ENCODE measurements at regions of chr18 and their contacts with region 1.

Region 1: DNA sequence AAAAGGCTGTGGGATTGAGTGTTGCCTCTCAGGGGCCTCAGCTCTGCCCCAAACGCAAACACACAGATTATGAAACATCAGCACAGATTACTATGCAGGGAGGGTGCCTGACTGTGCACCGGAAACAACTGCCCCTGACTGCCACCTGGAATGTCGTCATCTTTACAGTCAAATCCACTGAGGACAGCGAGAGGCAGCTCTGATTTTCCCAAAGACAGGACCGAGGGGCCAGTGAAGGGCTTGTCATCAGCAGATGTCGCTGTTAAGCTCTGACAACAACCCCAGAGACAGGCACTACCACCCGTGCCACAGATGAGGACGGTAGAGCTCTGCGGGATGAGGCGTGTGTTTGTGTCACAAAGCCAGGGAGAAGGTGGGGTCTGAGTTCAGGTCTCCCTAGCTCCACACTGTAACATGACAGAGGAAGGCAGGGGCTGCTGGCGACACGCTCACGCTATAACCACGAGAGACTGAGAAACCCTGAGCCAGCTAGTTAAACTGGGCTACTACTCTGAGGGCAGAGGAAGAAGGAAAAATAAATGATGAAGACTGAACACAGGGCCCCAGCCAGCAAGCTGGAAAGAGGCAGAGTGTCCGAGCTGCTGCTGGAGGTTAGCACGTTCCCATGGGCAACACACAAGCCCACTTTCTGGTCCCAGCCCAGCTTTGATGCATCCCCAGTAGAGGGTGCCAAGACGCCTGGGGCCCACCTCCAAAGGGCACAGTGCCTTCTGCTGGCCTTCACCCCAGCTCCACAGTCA is 47.0 kb downstream of the PARD6G start:
- DNase-seq: peak; percentile 42
- ATAC-seq: peak; percentile 92
- H3K4me3 ChIP-seq: no peak overlapping the region
- H3K27ac ChIP-seq: no peak overlapping the region
- H3K4me1 ChIP-seq: peaks cover 4% of the 10 kb centered on the region; the same call in 1 of the 2 replicates
- H3K27me3 ChIP-seq: no peaks in the 10 kb centered on the region
- CTCF ChIP-seq: no peak

Region 2: DNA sequence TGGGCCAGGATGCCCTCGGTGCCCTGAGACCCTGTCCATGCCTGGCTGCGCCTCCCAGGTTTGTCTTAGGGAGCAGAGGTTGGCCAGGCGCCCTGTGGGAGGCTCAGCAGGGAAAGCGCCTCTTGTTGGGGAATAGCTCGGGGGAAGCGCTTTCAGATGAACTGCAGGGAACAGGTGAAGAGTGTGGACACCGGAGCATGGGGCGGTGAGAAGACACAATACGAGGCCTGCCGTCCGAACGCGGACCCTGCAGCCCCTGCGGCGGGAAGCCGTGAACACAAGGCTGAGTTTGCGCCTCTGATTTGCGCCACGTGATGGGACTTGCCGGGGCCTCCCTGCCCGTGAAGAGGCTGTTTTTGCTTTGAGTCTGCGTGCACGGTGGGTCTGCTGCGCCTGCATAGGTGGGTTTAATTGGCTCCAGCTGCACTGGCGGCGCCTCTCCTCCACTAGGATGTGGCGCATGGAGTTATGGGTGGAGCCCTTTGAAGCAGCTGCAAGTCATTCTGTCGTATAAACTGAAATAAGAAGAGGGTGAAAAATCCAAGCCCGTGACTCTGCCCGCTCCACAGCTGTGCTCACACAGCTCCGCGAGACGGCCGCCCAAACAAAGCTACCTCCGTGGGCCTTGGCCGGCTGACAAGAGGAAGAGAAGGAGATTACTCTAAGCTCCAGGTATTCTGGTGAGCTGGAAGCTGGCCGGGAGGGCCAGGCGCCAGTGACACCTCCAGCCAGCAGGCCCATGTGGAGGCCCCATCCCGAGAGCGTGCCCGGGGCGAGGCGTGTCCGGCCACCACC is 624.3 kb before region 1 on chr18:
- CTCF ChIA-PET with region 1: no interaction called
- POLR2A ChIA-PET with region 1: no interaction called
- in situ Hi-C with region 1: no loop called
- intact Hi-C with region 1: no loop called
- DNase-seq: no peak
- ATAC-seq: no peak
- H3K4me3 ChIP-seq: no peak overlapping the region
- H3K27ac ChIP-seq: no peak overlapping the region
- H3K4me1 ChIP-seq: no peaks in the 10 kb centered on the region
- H3K27me3 ChIP-seq: no peaks in the 10 kb centered on the region; the same call in 1 of the 2 replicates
- CTCF ChIP-seq: no peak

Region 3: DNA sequence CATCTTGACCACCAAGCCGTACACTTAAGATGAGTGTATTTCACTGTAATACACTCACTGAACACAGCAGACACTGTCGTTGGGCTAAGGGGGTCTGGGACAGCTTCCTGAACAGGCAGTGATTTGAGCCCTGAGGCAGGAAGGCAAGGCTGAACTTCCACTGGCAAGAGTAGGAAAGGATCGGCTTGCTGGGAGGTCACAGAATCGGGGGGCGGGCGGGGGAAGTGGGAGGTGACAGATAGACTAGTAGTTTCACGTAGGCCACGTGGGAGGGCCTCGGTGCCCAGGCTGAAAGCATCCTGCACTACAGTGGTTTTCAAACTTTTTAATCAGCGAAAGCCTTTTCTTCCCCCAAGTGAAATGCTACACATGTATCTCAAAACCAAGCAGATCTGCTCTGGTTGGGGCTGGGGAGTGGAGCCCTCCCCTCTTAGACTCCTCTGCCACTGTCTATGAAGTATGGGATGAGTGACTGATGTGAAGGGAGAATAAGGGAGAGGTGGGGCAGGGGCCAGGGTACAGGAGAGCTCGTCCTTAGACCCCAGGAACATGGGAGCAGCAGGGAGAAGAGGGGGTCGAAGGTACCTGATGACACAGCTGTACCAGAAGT is 38.4 kb after region 1 on chr18:
- CTCF ChIA-PET with region 1: interaction called, 10 read pairs
- POLR2A ChIA-PET with region 1: no interaction called
- in situ Hi-C with region 1: no loop called
- intact Hi-C with region 1: no loop called
- DNase-seq: no peak
- ATAC-seq: no peak
- H3K4me3 ChIP-seq: no peak overlapping the region
- H3K27ac ChIP-seq: no peak overlapping the region
- H3K4me1 ChIP-seq: no peaks in the 10 kb centered on the region
- H3K27me3 ChIP-seq: no peaks in the 10 kb centered on the region
- CTCF ChIP-seq: no peak

Region 4: DNA sequence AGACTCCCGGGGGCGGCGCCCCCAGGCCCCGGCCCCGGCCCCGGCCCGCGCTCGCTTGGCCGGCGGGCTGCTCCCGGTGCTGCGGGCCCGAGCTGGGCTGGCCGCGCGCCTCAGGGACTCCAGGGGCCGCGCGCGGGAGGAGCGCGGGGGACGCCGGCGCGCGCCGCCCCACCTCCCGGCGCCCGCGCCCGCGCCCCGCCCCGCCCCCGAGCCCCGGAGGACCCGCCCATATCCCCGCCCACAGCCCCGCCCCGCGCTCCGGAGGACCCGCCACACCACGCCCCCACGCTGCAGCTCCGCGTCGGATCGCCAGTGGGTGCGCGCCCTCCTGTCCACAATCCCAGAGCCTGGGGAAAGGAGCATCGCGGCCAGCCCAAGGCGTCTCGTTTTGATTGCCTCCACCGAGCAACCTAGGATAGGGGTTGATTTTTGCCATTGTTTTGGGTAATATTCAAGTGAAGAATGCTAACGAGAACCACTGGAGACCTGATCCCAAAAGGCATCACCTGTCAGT is 47.1 kb after region 1 on chr18 and contains the start of gene PARD6G:
- CTCF ChIA-PET with region 1: interaction called, 9 read pairs
- POLR2A ChIA-PET with region 1: no interaction called
- in situ Hi-C with region 1: no loop called
- intact Hi-C with region 1: loop called (anchors 2 kb)
- DNase-seq: no peak
- ATAC-seq: peak; percentile 89
- H3K4me3 ChIP-seq: peak within 1 kb of the TSS; percentile 58 to 60
- H3K27ac ChIP-seq: no peak within 1 kb of the TSS
- H3K4me1 ChIP-seq: peaks cover 13% of the 10 kb centered on the region; the same call in 1 of the 2 replicates
- H3K27me3 ChIP-seq: no peaks in the 10 kb centered on the region; the same call in 1 of the 2 replicates
- CTCF ChIP-seq: no peak
- total RNA-seq, gene PARD6G: 5.2 TPM